OCI-LY7 (cell line): ENCODE measurements at regions of chr10 and their contacts with region 1.

Region 1: DNA sequence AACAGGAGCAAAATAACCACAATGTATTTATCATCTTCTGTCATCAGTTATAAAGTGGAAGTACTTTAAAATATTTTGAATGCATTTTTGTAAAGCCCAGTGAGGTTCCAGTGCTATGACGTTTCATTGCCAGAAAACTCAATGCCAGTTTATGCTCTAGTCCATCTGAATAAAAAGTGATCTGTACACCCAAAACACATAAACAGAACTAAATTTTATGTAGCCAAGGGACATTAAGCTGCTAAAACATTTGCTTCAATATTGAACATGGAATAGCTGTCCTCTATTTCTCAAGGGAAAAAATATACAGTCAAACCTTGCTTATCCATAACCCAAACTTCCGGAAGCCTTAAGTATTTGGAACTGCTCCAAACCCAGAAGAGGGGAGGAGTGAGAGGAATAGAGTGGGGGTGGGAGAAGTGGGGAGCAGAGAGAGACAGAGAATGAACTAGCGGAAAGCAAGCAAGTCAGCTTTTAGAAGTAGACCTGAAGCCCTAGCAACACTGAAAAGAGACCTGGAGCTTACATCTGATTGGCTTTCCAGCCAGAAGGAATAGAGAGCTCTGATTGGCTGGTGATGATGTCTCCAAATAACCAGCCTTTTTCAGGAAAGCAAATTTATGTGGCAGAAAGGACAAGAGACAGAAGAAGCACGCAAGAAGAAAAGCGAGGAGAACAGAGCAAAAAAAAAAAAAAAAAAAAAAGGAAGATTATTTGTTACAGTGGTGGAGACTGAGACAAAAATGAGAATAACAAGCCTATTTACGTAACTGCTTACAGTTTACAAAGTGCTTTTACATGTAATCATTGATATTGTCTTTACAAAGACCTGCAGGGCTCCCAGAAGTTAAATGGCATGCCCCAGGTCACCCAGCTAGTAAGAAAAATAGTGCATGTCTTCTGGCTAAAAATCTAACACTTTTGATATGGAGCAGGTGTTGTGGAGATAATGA is 196.0 kb downstream of the RNLS start:
- DNase-seq: peak; percentile 91
- H3K4me3 ChIP-seq: peak overlapping the region; percentile 65
- H3K27ac ChIP-seq: peak overlapping the region; percentile 99
- H3K4me1 ChIP-seq: peaks cover 85% of the 10 kb centered on the region
- CTCF ChIP-seq: no peak

Region 2: GRCh38 chr10:87817609-87818504 is 569.2 kb before region 1 on chr10 and contains the start of gene ATAD1:
- CTCF ChIA-PET with region 1: no interaction called
- POLR2A ChIA-PET with region 1: interaction called, 17 read pairs
- intact Hi-C with region 1: loop called (anchors 1 kb)
- DNase-seq: peak; percentile 93
- H3K4me3 ChIP-seq: peak within 1 kb of the TSS; percentile 86
- H3K27ac ChIP-seq: peak within 1 kb of the TSS; percentile 79
- H3K4me1 ChIP-seq: peaks cover 28% of the 10 kb centered on the region
- CTCF ChIP-seq: peak; percentile 28; the same call in 1 of the 2 replicates
- total RNA-seq, gene ATAD1: 17.7 and 19.6 TPM in 2 replicates

Region 3: DNA sequence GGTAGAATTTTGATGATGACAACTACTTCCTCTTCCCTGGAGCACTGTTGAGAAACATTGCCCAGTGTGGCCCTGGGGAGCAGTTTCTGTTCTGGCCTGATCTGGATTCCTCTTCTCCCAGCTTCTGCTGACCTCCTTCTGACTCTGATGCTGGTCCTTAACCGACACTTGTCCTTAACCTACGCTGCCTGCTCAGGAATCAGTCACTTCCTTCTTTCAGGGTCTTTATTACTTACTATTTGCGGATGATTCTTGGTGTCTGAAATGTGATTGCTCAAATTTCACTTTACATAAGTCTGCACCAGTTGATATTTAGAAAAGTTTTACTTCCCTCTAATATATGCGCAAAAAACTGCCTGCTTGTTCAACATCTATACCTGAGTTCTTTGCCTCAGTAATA is 359.5 kb before region 1 on chr10:
- CTCF ChIA-PET with region 1: interaction called, 3 read pairs
- POLR2A ChIA-PET with region 1: interaction called, 5 read pairs
- intact Hi-C with region 1: loop called (anchors 5 kb)
- DNase-seq: peak; percentile 61
- H3K4me3 ChIP-seq: peak overlapping the region; percentile 47
- H3K27ac ChIP-seq: peak overlapping the region; percentile 70
- H3K4me1 ChIP-seq: peaks cover 29% of the 10 kb centered on the region
- CTCF ChIP-seq: no peak

Region 4: DNA sequence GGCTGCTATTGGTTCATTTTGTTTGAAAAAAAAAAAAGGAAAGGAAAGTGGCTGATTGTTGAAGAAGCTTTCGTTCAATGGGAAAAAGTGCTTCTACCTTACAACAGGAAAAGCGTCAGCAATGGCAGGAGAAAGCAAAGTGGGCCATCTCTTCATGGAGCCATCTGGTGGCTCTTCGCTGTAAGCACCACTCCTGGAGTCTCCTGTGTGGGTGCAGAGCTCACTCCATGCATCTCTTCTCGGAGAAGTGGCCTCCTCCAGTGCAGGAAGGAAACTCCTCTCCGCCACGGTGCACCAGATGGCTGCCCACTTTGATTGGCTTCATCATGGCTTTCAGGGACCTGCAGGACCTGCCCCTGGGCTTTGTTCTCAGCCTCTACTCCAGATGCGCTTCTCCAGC is 272.7 kb before region 1 on chr10:
- CTCF ChIA-PET with region 1: interaction called, 8 read pairs
- POLR2A ChIA-PET with region 1: interaction called, 62 read pairs
- intact Hi-C with region 1: no loop called
- DNase-seq: peak; percentile 90
- H3K4me3 ChIP-seq: peak overlapping the region; percentile 33
- H3K27ac ChIP-seq: peak overlapping the region; percentile 83
- H3K4me1 ChIP-seq: peaks cover 98% of the 10 kb centered on the region
- CTCF ChIP-seq: peak; percentile 89

Region 5: GRCh38 chr10:88293073-88293472 is 94.0 kb before region 1 on chr10:
- CTCF ChIA-PET with region 1: interaction called, 4 read pairs
- POLR2A ChIA-PET with region 1: interaction called, 46 read pairs
- intact Hi-C with region 1: loop called (anchors 2 kb)
- DNase-seq: no peak
- H3K4me3 ChIP-seq: no peak overlapping the region
- H3K27ac ChIP-seq: no peak overlapping the region
- H3K4me1 ChIP-seq: peaks cover 49% of the 10 kb centered on the region
- CTCF ChIP-seq: no peak

Region 6: DNA sequence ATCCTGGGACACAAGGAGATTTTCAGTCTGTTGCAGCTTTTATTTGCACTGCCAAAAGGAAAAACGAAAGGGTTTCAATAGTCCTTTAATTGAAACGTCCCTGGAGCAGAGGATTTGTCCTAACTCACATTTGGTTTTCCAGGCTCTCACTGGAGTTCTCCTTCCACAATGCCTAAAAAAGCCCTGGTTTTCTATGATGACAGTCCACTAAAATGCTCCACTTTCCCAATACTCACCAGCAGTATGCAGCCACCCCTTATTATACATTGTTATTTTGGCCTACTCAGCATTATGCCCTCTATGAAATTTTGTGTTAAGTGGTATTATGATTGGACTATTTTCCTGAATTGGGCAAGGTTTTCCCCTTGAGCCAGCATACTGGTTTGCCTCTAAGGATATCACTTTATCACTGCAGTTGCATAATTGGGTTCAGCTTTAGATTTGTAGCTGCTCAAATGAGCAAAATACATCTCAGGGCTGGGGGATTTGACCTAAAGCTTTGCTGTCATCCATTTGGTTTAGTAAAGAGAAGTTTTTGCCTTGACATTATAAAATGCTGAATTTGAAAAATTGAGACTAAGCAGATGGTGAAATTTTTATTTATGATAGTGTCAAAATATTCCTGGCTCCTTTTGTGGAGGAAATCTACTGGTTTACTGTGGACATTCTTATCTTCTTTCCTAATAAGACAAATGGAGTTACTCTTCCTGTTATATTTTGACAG is 43.2 kb before region 1 on chr10:
- CTCF ChIA-PET with region 1: no interaction called
- POLR2A ChIA-PET with region 1: interaction called, 14 read pairs
- intact Hi-C with region 1: no loop called
- DNase-seq: no peak
- H3K4me3 ChIP-seq: no peak overlapping the region
- H3K27ac ChIP-seq: no peak overlapping the region
- H3K4me1 ChIP-seq: peaks cover 27% of the 10 kb centered on the region
- CTCF ChIP-seq: no peak

Region 7: DNA sequence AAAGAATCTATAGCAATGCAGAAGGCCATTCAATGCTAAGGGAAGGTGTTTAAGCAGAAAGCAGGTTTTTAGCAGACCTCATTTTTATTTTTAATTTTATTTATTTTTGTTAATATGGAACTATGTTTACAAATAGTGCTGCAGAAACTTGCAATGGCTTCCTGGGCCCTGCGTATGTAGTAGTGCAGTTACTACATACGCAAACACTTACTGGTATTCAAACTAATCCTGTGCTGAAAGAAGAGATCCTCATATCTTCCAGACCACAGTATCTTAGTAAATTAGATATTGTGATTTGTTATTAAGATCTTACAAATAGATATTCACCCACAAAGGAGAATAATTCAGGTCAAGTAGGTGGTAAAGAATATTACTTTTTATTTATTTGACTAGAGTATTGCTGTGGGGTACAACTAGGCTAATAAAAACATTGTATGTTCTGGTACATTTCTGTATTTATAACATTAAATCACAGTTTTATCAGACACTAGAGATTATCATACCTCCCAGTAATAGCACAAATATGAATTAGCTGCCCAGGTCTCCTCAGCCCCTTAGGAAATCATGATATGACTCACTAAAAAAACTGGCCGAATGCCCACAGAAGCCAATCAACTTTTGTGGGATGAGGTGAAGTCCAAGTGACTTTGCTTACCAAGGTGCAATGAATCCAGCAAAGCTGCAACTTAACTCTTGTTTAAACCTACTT is 138.4 kb after region 1 on chr10:
- CTCF ChIA-PET with region 1: no interaction called
- POLR2A ChIA-PET with region 1: no interaction called
- intact Hi-C with region 1: no loop called
- DNase-seq: no peak
- H3K4me3 ChIP-seq: no peak overlapping the region
- H3K27ac ChIP-seq: no peak overlapping the region
- H3K4me1 ChIP-seq: no peaks in the 10 kb centered on the region
- CTCF ChIP-seq: no peak

Region 8: DNA sequence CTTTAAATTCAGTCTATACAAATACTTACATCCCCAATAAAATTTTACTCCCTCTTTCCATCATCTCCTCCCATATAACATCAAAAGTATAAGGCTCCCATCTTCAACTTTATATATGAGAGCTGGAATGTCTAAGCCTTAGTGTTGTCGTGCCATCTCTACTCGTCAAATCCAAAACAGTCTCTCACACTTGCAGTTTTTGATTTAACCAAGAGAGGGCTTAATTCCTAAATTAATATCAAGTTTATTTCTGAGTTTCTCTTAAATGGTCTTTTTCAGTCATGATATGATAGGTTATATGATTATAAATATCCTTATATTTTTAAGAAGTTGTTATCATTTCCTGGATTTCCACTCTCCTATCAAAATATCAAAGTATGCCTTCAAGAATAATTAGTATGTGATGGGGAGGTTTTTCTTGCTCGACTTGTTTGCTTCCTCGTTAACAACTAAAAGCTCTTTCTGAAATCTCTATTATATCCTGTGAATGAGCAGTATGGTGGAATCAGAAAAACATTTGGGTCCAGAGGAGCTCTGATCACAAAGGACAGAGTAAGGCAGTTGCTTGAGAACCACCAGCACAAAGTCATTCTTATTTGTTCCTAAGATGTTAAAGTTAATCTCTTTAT is 306.4 kb after region 1 on chr10:
- CTCF ChIA-PET with region 1: no interaction called
- POLR2A ChIA-PET with region 1: no interaction called
- intact Hi-C with region 1: no loop called
- DNase-seq: no peak
- H3K4me3 ChIP-seq: no peak overlapping the region
- H3K27ac ChIP-seq: no peak overlapping the region
- H3K4me1 ChIP-seq: no peaks in the 10 kb centered on the region
- CTCF ChIP-seq: peak; percentile 55

Region 9: GRCh38 chr10:88880282-88881076 is 493.4 kb after region 1 on chr10:
- CTCF ChIA-PET with region 1: no interaction called
- POLR2A ChIA-PET with region 1: interaction called, 3 read pairs
- intact Hi-C with region 1: loop called (anchors 5 kb)
- DNase-seq: peak; percentile 91
- H3K4me3 ChIP-seq: peak overlapping the region; percentile 80
- H3K27ac ChIP-seq: peak overlapping the region; percentile 93
- H3K4me1 ChIP-seq: peaks cover 64% of the 10 kb centered on the region
- CTCF ChIP-seq: peak; percentile 43; the same call in 1 of the 2 replicates